AG04449 (cell line): ENCODE measurements at regions of chr1 and their contacts with region 1.

Region 1: DNA sequence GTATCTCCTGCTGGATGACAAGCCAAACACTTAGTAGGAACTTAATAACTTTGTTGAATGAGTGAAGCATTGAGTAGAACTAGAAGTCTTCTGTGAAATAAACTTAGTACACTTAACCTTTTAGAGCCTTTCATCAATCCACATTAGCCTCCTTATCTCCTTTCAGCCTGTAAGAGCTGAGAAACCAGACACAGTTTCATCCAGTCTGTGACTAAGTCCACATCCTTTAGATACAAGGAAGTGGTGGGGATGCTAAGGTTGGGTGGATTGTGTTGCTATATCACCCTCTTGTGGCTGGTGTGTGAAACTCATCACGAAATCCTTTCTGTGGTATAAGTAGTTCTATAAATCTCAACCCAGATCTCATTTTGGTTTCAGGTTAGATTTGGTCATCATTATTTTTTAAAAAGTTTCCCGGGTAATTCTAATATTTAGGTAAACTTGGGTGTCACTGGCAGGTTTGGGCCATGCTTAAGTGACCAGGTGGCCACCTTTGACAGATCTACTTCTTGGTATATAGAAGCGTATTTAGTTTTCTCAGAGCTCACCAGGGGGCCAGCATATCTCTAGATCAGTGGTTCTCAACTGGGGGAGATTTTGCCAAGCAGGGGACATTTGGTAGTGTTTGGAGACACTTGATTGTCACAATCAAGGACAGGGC is 27.8 kb upstream of the CD84 start:
- DNase-seq: peak; percentile 49
- H3K4me3 ChIP-seq: no peak overlapping the region
- CTCF ChIP-seq: peak; percentile 61

Region 2: GRCh38 chr1:160428655-160429054 is 178.5 kb before region 1 on chr1:
- CTCF ChIA-PET with region 1: interaction called, 65 read pairs
- POLR2A ChIA-PET with region 1: no interaction called
- DNase-seq: no peak
- H3K4me3 ChIP-seq: no peak overlapping the region
- CTCF ChIP-seq: peak; percentile 55

Region 3: DNA sequence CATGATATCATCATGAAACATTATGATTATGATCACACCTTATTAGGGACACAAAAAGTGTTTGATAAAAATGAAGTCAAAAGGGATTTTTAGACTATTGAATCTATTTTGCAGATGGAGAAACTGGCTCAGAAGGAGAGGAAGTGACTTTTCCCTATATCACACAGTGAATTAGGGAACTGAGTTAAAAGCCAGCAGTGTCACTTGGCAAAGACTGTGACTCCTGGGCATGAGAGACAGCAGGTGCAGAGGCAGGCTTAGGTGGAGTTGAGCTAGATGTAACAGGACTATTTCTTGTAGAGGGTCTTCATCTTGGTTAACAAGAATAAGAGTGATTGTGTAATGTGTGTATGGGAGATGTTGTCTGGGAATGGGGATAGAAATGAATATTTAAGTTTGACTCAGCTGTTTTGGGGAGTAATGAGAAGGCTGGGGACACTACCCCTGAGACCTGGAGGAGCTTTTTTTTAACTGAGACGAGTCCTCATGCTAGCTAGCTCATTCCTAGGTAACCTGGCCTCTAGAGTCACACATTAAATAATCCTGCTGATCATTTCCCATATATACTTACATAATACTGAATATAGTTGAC is 26.8 kb before region 1 on chr1:
- CTCF ChIA-PET with region 1: no interaction called
- POLR2A ChIA-PET with region 1: no interaction called
- DNase-seq: no peak
- H3K4me3 ChIP-seq: no peak overlapping the region
- CTCF ChIP-seq: no peak